Posterior vena cava (tissue), 2 donors: ENCODE measurements at regions of chr5 and their contacts with region 1.

Region 1: DNA sequence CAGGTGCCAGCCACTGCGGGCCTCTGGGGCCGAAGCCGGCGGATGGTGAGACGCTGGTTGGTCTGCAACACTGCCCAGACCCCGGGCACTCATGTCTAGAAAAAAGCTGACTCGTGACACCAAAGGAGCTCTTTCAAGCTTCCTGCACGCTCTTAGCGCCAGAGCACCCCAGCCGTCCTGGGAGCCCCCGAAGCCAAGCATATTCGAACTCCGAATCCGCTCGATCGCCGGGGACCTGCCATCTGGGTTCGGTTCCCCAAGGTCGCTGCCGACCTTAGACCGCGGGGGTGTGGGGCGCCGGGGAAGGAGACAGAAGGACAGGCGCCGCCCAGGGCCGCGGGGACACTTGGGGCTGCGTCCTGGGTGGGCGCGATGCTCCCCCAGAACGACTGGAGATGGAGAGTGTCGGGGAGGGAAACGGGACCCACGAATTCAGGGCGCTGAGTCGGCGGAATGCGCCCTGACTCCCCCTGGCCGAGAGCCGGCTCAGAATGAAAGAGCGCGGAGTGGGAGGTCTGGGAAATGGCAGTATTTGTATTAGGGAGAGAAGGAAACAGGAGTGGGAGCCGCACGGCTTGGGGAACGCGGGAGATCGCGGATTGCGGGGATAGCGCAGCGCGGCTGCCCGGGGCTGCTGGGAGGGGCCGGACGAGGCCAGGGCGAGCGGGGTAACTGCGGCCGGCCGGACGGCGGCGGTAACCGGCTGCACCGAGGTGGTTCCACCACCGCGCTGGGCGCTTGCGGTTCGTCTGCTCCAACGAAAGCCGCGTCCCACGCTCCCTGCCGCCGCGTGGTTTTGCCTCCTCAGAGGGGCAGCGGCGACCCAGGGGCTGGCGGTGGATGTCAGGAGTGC is 20.1 kb upstream of the MARCHF6 start:
- DNase-seq: peak; percentile 81

Region 2: GRCh38 chr5:9861666-9862256 is 471.6 kb before region 1 on chr5:
- intact Hi-C with region 1: loop called in 1 of 2 experiments (anchors 5 kb)
- DNase-seq: no peak

Region 3: GRCh38 chr5:11273180-11273903 is 940.0 kb after region 1 on chr5:
- intact Hi-C with region 1: loop called in 1 of 2 experiments (anchors 5 kb)
- DNase-seq: no peak